PC-3 (cell line): ENCODE measurements at regions of chr3 and their contacts with region 1.

Region 1: DNA sequence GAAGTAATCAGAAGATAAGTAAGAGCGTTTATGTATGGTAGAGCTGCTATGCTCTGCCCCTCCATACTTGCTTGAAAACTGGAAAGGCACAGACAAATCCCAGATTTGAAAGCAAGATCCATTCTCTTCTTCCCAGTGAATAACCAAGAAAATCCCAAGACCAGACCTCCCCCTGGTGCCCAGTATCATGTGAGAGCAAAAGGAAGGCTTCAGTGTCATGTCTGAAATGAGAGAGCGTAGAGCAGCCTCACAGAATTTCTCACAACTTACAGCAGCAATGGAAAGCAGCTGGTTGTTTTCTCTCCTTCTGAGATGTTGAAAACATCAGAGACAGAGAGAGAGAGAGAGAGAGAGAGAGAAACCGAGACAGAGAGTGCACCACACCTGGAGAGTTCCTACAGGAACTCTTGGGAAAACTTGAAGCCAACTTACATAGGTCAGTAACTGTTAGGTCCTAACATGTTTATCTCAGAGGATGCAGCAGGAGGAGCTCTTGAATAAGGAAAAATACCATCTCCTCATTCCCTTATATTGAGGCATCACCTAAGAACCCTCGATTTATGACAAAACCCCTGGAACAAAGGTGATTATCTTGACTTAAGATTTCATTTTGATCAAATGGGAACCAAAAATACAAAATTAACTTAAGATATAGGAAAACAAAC is 273.3 kb downstream of the NSUN3 start:
- DNase-seq: peak; percentile 81
- ATAC-seq: peak; percentile 98
- H3K4me3 ChIP-seq: no peak overlapping the region
- H3K27ac ChIP-seq: no peak overlapping the region
- H3K4me1 ChIP-seq: no peaks in the 10 kb centered on the region
- H3K27me3 ChIP-seq: no peaks in the 10 kb centered on the region
- CTCF ChIP-seq: peak; percentile 81

Region 2: GRCh38 chr3:94249585-94249984 is 86.6 kb before region 1 on chr3:
- CTCF ChIA-PET with region 1: interaction called, 7 read pairs
- POLR2A ChIA-PET with region 1: no interaction called
- intact Hi-C with region 1: loop called (anchors 1 kb)
- DNase-seq: peak; percentile 81
- ATAC-seq: peak; percentile 74
- H3K4me3 ChIP-seq: no peak overlapping the region
- H3K27ac ChIP-seq: no peak overlapping the region
- H3K4me1 ChIP-seq: no peaks in the 10 kb centered on the region
- H3K27me3 ChIP-seq: peaks cover 37% of the 10 kb centered on the region
- CTCF ChIP-seq: peak; percentile 95

Region 3: DNA sequence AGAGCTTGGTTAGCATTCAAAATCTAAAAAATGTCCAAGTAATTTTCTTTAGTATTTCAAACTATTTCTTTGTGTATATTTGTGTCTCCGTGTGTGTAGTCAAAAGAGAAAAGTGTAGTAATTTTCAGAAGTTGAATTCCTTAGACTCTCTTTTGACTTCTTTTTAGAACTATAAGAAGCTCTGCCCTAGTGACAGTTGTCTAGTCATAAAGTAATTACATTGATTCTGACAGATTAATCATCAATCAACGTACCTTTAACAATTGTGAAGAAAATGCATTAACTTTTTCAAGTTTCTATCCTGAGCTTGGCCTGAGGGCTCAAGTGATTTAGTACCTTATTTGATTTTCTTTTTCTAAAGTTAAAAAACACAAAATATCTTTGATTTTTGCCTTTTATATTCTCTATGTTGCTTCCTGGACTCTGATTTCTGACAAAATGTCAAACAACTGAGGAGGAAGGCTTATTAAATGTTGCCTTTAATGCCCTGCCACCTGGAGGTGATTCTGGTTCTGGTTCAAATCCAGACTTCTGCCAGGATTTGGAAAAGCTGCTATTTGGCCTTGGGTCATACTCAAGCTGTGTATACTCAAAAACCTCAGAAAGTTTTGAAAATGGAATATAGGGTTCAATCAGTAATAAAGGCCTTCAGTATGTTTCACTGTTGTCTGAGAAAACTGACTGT is 380.3 kb after region 1 on chr3:
- CTCF ChIA-PET with region 1: interaction called, 3 read pairs
- POLR2A ChIA-PET with region 1: no interaction called
- intact Hi-C with region 1: loop called (anchors 1 kb)
- DNase-seq: peak; percentile 43
- ATAC-seq: no peak
- H3K4me3 ChIP-seq: no peak overlapping the region
- H3K27ac ChIP-seq: no peak overlapping the region
- H3K4me1 ChIP-seq: no peaks in the 10 kb centered on the region
- H3K27me3 ChIP-seq: no peaks in the 10 kb centered on the region
- CTCF ChIP-seq: peak; percentile 57

Region 4: DNA sequence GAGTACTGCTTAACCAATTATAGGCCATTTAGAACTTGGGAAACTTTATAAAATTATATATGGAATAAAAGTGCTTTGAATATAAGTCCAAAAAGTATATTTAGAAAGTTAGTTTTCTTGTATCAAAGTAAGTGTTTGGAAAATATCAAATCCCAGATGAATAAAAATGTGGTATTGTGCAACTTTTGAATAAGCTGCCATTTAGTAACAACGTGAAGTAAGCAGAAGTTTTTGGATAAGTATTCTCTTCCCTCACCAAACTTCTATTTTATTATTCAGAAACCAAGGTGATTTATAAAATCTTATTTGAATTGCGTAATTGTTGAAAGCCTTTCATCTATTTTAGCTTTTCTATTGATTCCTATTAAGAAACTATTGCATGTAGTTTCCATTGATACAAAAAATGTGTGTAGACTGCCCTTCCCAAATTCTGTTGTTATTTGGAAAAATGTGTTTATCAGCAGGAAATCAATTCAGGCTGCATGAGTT is 532.9 kb after region 1 on chr3:
- CTCF ChIA-PET with region 1: no interaction called
- POLR2A ChIA-PET with region 1: no interaction called
- intact Hi-C with region 1: loop called (anchors 5 kb)
- DNase-seq: no peak
- ATAC-seq: no peak
- H3K4me3 ChIP-seq: no peak overlapping the region
- H3K27ac ChIP-seq: no peak overlapping the region
- H3K4me1 ChIP-seq: no peaks in the 10 kb centered on the region
- H3K27me3 ChIP-seq: no peaks in the 10 kb centered on the region
- CTCF ChIP-seq: no peak